ENCODE measurements at regions of chr2 and their contacts with region 1.

Region 1: GRCh38 chr2:197322724-197323720 is 12.4 kb upstream of the ANKRD44 start:
- DNase-seq: no peak
- H3K4me3 Mint-ChIP-seq: peak overlapping the region; percentile 71
- H3K27ac Mint-ChIP-seq: peak overlapping the region; percentile 87
- H3K4me1 Mint-ChIP-seq: peaks cover 50% of the 10 kb centered on the region
- H3K27me3 Mint-ChIP-seq: no peaks in the 10 kb centered on the region

Region 2: GRCh38 chr2:196967116-196967515 is 355.9 kb before region 1 on chr2:
- intact Hi-C with region 1: no loop called
- DNase-seq: no peak
- H3K4me3 Mint-ChIP-seq: no peak overlapping the region
- H3K27ac Mint-ChIP-seq: no peak overlapping the region
- H3K4me1 Mint-ChIP-seq: peaks cover 35% of the 10 kb centered on the region
- H3K27me3 Mint-ChIP-seq: no peaks in the 10 kb centered on the region

Region 3: DNA sequence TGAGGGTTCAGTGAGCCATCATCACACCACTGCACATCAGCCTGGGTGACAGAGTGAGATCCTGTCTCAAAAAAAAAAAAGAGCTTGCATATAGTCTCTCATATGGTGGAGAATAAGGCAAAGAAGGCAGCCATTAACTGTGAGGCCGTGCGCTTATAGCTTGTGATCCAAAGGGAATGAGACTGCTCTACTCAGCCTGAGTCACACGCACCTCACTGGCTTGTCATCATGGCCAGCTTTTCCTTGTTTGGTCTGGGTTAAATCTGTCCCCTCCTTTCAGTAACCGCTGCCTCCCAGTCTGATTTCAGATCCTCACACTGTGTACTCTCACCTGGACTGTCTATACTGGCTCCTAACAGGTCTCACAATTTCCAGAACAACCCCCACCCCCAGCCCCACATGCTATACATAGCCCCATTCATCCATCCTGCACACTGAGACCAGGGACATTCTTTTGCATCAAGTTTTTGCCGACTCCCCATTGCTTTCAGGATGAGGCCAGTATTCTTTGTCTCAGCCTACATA is 22.9 kb after region 1 on chr2:
- intact Hi-C with region 1: loop called (anchors 2 kb)
- DNase-seq: no peak
- H3K4me3 Mint-ChIP-seq: no peak overlapping the region
- H3K27ac Mint-ChIP-seq: no peak overlapping the region
- H3K4me1 Mint-ChIP-seq: peaks cover 6% of the 10 kb centered on the region
- H3K27me3 Mint-ChIP-seq: no peaks in the 10 kb centered on the region

Region 4: GRCh38 chr2:197359859-197360258 is 36.8 kb after region 1 on chr2:
- intact Hi-C with region 1: loop called (anchors 2 kb)
- DNase-seq: no peak
- H3K4me3 Mint-ChIP-seq: no peak overlapping the region
- H3K27ac Mint-ChIP-seq: no peak overlapping the region
- H3K4me1 Mint-ChIP-seq: peaks cover 26% of the 10 kb centered on the region
- H3K27me3 Mint-ChIP-seq: no peaks in the 10 kb centered on the region

Region 5: GRCh38 chr2:197388866-197389587 is 66.0 kb after region 1 on chr2:
- intact Hi-C with region 1: no loop called
- DNase-seq: no peak
- H3K4me3 Mint-ChIP-seq: no peak overlapping the region
- H3K27ac Mint-ChIP-seq: no peak overlapping the region
- H3K4me1 Mint-ChIP-seq: no peaks in the 10 kb centered on the region
- H3K27me3 Mint-ChIP-seq: peaks cover 1% of the 10 kb centered on the region

Measured in activated T-helper 1 cell treated with anti-CD3 and anti-CD28 coated beads, Interleukin-12 subunit alpha, Interleukin-12 subunit beta, Interleukin-2, Interleukin-4 antibody, amounts not matched to agents 30 ng/mL and 10 ng/mL and 1 ng/mL, durations not matched to agents 14 hours and 24 hours and 36 hours (primary cell).